K562 (cell line): ENCODE measurements at regions of chr16 and their contacts with region 1.

Region 1: GRCh38 chr16:71929048-71929447 is 33.7 kb downstream of the IST1 start:
- DNase-seq: no peak
- ATAC-seq: no peak
- H3K4me3 ChIP-seq: no peak overlapping the region
- H3K27ac ChIP-seq: no peak overlapping the region
- H3K4me1 ChIP-seq: peaks cover 0 to 7% of the 10 kb centered on the region in 2 experiments; a peak in 2 of 5 replicates
- H3K27me3 ChIP-seq: no peaks in the 10 kb centered on the region
- CTCF ChIP-seq: no peak
- EP300 ChIP-seq: no peak
- POLR2A ChIP-seq: no peak
- RAD21 ChIP-seq: no peak

Region 2: GRCh38 chr16:71830359-71830758 is 98.7 kb before region 1 on chr16:
- CTCF ChIA-PET with region 1: no interaction called
- POLR2A ChIA-PET with region 1: no interaction called
- in situ Hi-C with region 1: no loop called
- intact Hi-C with region 1: no loop called
- DNase-seq: no peak
- ATAC-seq: no peak
- H3K4me3 ChIP-seq: no peak overlapping the region
- H3K27ac ChIP-seq: no peak overlapping the region
- H3K4me1 ChIP-seq: no peaks in the 10 kb centered on the region; a peak in 2 of 5 replicates
- H3K27me3 ChIP-seq: no peaks in the 10 kb centered on the region
- CTCF ChIP-seq: no peak
- EP300 ChIP-seq: no peak
- POLR2A ChIP-seq: no peak
- RAD21 ChIP-seq: no peak

Region 3: GRCh38 chr16:71917900-71918299 is 11.1 kb before region 1 on chr16:
- CTCF ChIA-PET with region 1: no interaction called
- POLR2A ChIA-PET with region 1: interaction called, 26 read pairs
- in situ Hi-C with region 1: no loop called
- intact Hi-C with region 1: no loop called
- DNase-seq: no peak
- ATAC-seq: no peak
- H3K4me3 ChIP-seq: no peak overlapping the region
- H3K27ac ChIP-seq: no peak overlapping the region
- H3K4me1 ChIP-seq: no peaks in the 10 kb centered on the region
- H3K27me3 ChIP-seq: no peaks in the 10 kb centered on the region
- CTCF ChIP-seq: no peak
- EP300 ChIP-seq: no peak
- POLR2A ChIP-seq: no peak
- RAD21 ChIP-seq: no peak